Aorta (tissue), 5 donors: ENCODE measurements at regions of chr4 and their contacts with region 1.

Region 1: DNA sequence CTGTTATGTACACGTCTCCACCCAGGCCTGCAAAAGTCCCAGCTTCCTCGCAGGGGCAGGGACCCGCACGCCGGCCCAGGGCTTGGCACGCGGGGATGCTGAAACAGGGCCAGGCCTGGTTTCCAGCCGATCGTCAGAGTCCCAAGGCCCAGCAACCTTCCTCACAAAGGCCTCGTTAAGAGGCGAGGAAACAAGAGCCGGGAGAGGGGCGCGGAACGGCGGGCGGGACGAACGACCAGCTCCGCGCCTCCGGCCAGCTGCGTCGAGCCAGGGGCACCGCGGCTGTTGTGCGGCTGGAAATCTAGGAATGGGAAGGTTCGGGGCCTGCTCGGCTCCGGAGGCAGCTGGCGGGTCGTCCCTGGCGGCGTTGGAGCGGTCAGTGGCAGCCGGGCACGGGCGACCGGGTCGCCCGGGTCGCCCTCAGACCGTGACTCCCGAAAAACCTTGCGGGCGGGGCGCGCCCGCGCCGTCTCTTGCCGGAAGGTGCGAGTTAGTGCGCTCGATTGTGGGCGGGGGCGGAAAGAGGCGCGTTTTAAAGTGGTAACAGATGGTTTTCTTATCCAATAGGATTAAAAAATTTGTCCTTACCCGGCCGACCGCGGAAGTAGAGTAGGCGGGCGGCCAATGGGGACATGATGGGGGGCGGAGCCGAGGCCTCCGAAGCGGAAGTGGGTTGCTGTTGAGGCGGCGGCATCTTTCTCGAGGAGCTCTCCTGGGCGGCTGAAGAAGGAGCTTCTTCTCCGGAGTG is at the start of gene RNF4:
- DNase-seq: peak; percentile 98
- ATAC-seq: peak; percentile 96
- H3K4me3 ChIP-seq: peak within 1 kb of the TSS; percentile 79 to 87
- H3K27ac ChIP-seq: peak within 1 kb of the TSS; percentile 23 to 41
- H3K4me1 ChIP-seq: peaks cover 0 to 3% of the 10 kb centered on the region in 2 donors
- H3K27me3 ChIP-seq: no peaks in the 10 kb centered on the region
- total RNA-seq, gene RNF4: 50.7 to 52.5 TPM

Region 2: DNA sequence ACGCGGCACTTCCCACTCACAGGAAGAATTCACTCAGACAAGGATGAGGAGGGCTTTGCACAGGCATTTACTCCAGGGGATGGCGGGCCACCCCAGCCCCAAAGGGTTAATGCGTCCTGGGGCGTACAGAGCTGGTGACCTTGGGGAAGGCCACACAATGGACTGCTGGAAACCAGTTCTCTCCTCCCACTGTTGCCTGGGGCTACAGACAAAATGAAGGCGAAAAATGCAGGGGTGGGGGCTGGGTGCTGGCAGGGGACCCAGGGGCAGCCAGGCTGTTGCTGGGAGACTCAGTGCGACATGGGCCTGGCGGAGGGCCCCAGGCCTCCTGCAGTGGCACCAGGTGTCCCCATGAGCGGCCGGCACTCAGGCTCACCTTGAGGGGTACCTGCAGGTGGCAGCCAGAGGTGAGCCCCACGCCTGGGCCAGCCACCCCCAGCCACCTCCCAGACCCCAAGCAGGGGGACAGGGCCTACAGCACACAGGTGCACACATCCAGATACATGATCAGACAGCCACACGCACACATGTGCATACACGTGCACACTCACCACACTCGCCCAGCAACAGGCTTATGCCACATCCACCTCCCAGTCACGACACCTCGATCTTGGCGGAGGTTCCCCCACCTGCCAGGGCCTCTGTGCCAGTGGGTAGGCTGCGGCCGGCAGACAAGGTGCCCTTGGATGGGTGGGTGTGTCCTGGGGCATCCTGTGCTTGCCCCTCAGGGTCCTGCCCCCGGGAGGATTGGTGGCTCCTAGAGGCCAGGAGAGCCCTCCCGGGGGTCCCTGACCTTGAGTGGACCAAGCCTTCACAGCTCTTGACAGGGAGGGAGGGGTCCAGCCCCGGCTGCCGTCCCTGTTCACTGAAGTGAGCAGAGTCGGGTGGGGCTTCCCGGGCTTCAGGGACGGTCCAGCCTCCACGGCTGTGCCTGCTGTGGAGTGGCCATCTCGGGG is 396.4 kb before region 1 on chr4:
- intact Hi-C with region 1: no loop called
- DNase-seq: peak in 1 of 2 donors; percentile 67
- ATAC-seq: no peak
- H3K4me3 ChIP-seq: no peak overlapping the region
- H3K27ac ChIP-seq: no peak overlapping the region
- H3K4me1 ChIP-seq: no peaks in the 10 kb centered on the region
- H3K27me3 ChIP-seq: no peaks in the 10 kb centered on the region

Region 3: GRCh38 chr4:2255501-2256155 is 213.0 kb before region 1 on chr4:
- intact Hi-C with region 1: loop called in 1 of 2 experiments (anchors 10 kb)
- DNase-seq: peak; percentile 56 to 81
- ATAC-seq: peak; percentile 43
- H3K4me3 ChIP-seq: no peak overlapping the region
- H3K27ac ChIP-seq: peak overlapping the region in 1 of 2 donors; percentile 76
- H3K4me1 ChIP-seq: no peaks in the 10 kb centered on the region
- H3K27me3 ChIP-seq: no peaks in the 10 kb centered on the region

Region 4: GRCh38 chr4:2583517-2583916 is 114.9 kb after region 1 on chr4:
- intact Hi-C with region 1: no loop called
- DNase-seq: no peak
- ATAC-seq: no peak
- H3K4me3 ChIP-seq: no peak overlapping the region
- H3K27ac ChIP-seq: no peak overlapping the region
- H3K4me1 ChIP-seq: no peaks in the 10 kb centered on the region
- H3K27me3 ChIP-seq: no peaks in the 10 kb centered on the region

Region 5: DNA sequence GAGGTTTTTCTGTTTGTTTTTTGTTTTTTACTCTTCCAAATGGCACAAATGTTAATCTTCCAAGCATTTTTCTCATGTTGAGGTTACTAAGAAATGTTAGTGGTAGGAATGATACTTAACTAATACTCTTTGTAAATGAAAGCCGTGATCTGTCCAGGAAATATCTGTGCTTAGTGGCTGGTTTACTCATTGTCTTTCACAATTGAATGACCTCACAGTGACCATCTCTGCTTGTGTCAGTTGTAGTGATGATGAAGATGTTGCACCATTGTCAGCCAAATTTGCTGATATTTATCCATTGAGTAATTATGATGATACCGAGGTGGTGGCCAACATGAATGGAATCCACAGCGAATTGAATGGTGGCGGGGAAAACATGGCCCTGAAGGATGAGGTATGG is 194.0 kb after region 1 on chr4:
- intact Hi-C with region 1: no loop called
- DNase-seq: no peak
- ATAC-seq: no peak
- H3K4me3 ChIP-seq: no peak overlapping the region
- H3K27ac ChIP-seq: peak overlapping the region in 1 of 2 donors; percentile 13
- H3K4me1 ChIP-seq: peaks cover 0 to 3% of the 10 kb centered on the region in 2 donors
- H3K27me3 ChIP-seq: no peaks in the 10 kb centered on the region